Mammary epithelial cell (primary cell): ENCODE measurements at regions of chr2 and their contacts with region 1.

Region 1: DNA sequence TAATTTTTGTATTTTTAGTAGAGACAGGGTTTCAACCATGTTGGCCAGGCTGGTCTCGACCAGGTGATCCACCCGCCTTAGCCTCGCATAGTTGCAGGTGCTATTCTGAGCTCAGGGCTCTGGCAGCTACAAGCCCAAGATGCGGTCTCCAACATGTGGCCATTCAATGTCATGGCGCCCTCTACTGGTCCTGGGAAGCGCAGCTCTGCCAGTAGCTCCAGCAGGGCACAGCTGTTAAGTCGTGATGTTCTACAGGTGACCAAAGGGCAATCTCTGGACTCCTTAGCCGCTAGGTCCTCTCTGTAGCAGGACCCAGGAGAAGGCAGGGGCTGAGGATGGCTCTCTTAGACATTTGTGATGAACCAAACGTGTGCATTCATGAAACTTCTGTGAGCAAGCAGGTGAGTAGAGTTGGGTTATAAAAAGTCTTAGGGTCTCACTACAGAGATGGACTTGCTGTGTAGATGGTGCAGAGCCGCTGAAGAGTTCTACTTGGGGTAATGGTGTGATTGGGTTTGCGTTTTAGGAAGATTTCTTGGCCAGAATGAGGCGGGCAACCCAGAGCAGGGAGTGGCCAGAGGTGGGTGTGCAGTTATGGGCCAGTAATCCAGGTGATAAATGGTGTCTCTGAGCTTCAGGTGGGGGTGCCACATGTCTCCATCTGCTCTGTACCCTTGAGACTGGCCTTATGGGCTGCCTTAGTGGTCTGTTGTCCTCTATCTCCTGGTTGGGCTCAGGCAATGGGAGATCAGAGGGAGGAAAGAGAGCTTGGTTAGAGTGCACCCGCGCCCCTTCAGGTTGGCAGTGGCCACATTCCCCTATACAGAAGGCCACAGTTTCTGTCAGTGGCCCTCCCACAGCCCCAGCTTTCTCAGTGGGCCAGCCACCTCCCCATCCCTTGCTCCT is 31.0 kb downstream of the IL37 start:
- DNase-seq: peak; percentile 77
- H3K4me3 ChIP-seq: no peak overlapping the region
- H3K27ac ChIP-seq: no peak overlapping the region
- H3K4me1 ChIP-seq: peaks cover 23% of the 10 kb centered on the region
- H3K27me3 ChIP-seq: no peaks in the 10 kb centered on the region
- CTCF ChIP-seq: peak; percentile 99

Region 2: DNA sequence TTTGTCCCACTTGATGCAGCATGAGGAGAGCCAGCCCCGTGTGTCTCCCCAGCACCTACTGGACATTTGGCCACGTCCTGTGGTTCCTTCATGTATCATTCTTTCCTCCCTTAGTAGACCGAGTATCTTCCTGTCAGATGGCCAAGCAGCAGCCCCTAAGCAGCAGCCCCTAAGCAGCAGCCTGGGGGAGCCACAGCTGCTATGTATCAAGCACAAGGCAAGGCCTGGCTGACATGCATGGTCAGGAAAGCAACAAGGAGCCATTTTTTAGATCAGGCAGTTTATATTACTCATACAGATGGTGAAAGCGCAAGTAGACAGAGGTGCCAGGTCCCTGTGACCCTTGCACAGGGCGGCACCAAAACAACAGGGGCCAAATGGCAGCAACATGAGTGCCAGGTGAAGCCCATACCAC is 335.5 kb before region 1 on chr2:
- CTCF ChIA-PET with region 1: no interaction called
- dilution Hi-C with region 1: no loop called
- in situ Hi-C with region 1: no loop called
- intact Hi-C with region 1: loop called (anchors 5 kb)
- DNase-seq: no peak
- H3K4me3 ChIP-seq: no peak overlapping the region
- H3K27ac ChIP-seq: no peak overlapping the region
- H3K4me1 ChIP-seq: peaks cover 5% of the 10 kb centered on the region
- H3K27me3 ChIP-seq: no peaks in the 10 kb centered on the region
- CTCF ChIP-seq: no peak

Region 3: GRCh38 chr2:112737542-112738232 is 204.3 kb before region 1 on chr2:
- CTCF ChIA-PET with region 1: no interaction called
- dilution Hi-C with region 1: no loop called
- in situ Hi-C with region 1: no loop called
- intact Hi-C with region 1: no loop called
- DNase-seq: no peak
- H3K4me3 ChIP-seq: no peak overlapping the region
- H3K27ac ChIP-seq: no peak overlapping the region
- H3K4me1 ChIP-seq: peaks cover 24% of the 10 kb centered on the region
- H3K27me3 ChIP-seq: no peaks in the 10 kb centered on the region
- CTCF ChIP-seq: no peak

Region 4: DNA sequence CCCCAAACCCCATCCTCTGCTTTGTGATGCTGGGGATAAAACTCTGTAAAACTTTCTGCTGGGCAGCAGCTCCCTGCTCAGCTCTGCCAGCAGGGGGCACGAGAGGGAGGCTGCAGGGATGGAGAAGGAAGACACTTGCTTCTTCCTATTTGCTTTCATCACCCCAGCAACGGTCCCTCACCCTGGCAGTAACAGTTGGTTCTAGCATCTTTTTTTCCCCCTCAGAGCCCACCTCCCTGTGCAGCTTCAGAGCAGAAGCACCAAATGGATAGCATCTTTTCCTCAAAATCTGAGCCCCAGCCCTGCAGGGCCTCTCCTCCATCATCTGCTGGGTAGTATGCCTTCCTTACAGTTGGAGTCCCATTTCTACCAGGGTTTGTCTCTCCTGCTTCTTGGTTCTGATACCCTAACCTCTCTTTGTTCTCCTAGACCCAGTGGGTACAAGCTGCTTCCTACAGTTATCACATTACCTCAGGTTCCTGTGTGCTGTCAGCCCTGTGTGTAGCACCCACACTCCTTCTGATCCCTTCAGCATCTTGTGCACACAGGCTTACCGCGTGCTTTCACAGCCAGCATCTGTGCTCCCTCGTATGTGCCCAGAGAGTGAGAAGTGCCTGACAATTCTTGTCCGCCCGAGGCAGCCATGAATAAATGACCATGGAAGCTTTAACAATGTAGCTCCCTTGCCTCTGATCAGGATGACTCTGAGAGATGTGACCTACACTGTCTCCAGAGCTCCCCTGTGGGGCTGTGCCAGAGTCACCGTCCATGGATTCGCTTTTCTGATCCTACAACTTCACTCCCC is 192.0 kb before region 1 on chr2:
- CTCF ChIA-PET with region 1: interaction called, 37 read pairs
- dilution Hi-C with region 1: no loop called
- in situ Hi-C with region 1: loop called (anchors 5 kb)
- intact Hi-C with region 1: loop called (anchors 1 kb)
- DNase-seq: peak; percentile 60
- H3K4me3 ChIP-seq: no peak overlapping the region
- H3K27ac ChIP-seq: peak overlapping the region; percentile 28
- H3K4me1 ChIP-seq: peaks cover 6% of the 10 kb centered on the region
- H3K27me3 ChIP-seq: no peaks in the 10 kb centered on the region
- CTCF ChIP-seq: peak; percentile 97 to 99

Region 5: GRCh38 chr2:112784199-112785189 is 157.5 kb before region 1 on chr2 and contains the start of gene IL1A:
- CTCF ChIA-PET with region 1: interaction called, 7 read pairs
- dilution Hi-C with region 1: no loop called
- in situ Hi-C with region 1: no loop called
- intact Hi-C with region 1: loop called (anchors 1 kb)
- DNase-seq: peak; percentile 93
- H3K4me3 ChIP-seq: peak within 1 kb of the TSS; percentile 51 to 55 (median 54)
- H3K27ac ChIP-seq: peak within 1 kb of the TSS; percentile 92
- H3K4me1 ChIP-seq: peaks cover 24% of the 10 kb centered on the region
- H3K27me3 ChIP-seq: no peaks in the 10 kb centered on the region
- CTCF ChIP-seq: no peak
- total RNA-seq, gene IL1A: 17.5 to 184 TPM

Region 6: DNA sequence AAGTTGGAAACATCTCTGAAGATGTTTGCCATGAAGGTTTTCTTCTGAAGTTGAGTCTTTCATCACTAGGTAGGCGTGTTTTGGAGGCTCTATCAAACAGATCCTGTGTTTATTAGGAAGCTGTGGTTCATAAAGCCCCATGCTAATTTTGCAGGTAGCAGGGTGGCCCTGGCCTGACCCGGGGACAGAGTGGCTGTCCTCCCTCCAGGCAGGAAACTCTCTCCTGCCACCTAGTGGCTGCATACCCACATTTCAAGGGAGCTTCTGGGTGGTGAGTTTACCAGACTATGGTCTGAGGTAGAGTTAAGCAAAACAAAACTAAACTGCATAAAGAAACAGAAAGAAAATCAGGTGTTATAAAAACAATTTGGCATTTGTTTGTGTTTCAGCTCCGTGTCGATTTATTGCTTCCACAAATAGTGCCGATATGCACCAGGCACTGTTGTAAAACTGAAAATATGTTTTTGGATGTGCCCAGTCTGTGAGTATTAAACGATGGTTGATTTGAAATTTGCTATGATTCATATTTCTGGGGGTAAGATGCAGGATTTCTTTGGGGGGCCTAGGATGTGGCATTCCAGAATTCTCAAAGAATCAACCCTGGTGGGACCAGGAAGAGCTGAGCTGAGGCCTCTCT is 57.0 kb before region 1 on chr2:
- CTCF ChIA-PET with region 1: interaction called, 10 read pairs
- dilution Hi-C with region 1: no loop called
- in situ Hi-C with region 1: no loop called
- intact Hi-C with region 1: loop called (anchors 2 kb)
- DNase-seq: peak; percentile 44
- H3K4me3 ChIP-seq: no peak overlapping the region
- H3K27ac ChIP-seq: no peak overlapping the region
- H3K4me1 ChIP-seq: peaks cover 43% of the 10 kb centered on the region
- H3K27me3 ChIP-seq: no peaks in the 10 kb centered on the region
- CTCF ChIP-seq: peak; percentile 79 to 93

Region 7: DNA sequence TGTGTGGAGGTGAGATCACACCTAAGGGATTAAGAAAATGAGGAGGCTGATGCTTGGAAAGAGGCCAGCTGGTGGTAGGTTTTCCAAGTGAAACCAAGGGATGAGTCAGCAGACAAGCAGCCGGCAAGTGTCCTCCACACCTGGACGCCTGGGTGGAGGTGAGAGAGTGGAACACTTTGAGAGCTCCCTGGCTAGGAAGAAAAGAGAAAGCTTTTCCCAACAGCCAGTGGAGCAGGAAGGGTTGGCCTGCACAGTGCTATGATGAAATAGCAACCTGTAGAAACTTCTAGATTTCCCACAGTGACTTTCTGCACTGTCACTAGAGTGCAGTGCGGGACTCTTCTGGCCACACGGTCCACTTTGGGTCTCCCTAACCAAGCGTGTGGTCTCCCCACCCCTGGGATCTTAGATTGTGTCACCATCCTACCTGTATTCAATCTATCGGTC is 50.6 kb before region 1 on chr2:
- CTCF ChIA-PET with region 1: interaction called, 12 read pairs
- dilution Hi-C with region 1: no loop called
- in situ Hi-C with region 1: no loop called
- intact Hi-C with region 1: no loop called
- DNase-seq: peak; percentile 99
- H3K4me3 ChIP-seq: no peak overlapping the region
- H3K27ac ChIP-seq: peak overlapping the region; percentile 69
- H3K4me1 ChIP-seq: peaks cover 32% of the 10 kb centered on the region
- H3K27me3 ChIP-seq: no peaks in the 10 kb centered on the region
- CTCF ChIP-seq: peak in 1 of 2 donors; percentile 23

Region 8: GRCh38 chr2:112926707-112927106 is 15.3 kb before region 1 on chr2:
- CTCF ChIA-PET with region 1: interaction called, 14 read pairs
- dilution Hi-C with region 1: no loop called
- in situ Hi-C with region 1: no loop called
- intact Hi-C with region 1: no loop called
- DNase-seq: no peak
- H3K4me3 ChIP-seq: no peak overlapping the region
- H3K27ac ChIP-seq: no peak overlapping the region
- H3K4me1 ChIP-seq: no peaks in the 10 kb centered on the region
- H3K27me3 ChIP-seq: no peaks in the 10 kb centered on the region
- CTCF ChIP-seq: no peak

Region 9: GRCh38 chr2:113060396-113060795 is 118.4 kb after region 1 on chr2:
- CTCF ChIA-PET with region 1: no interaction called
- dilution Hi-C with region 1: no loop called
- in situ Hi-C with region 1: no loop called
- intact Hi-C with region 1: no loop called
- DNase-seq: peak; percentile 30
- H3K4me3 ChIP-seq: no peak overlapping the region
- H3K27ac ChIP-seq: no peak overlapping the region
- H3K4me1 ChIP-seq: peaks cover 10% of the 10 kb centered on the region
- H3K27me3 ChIP-seq: no peaks in the 10 kb centered on the region
- CTCF ChIP-seq: no peak